ENCODE measurements at regions of chr7 and their contacts with region 1.

Region 1: GRCh38 chr7:95396136-95397032 is at the start of gene PON3:
- DNase-seq: peak in 1 of 2 experiments; percentile 56
- H3K4me3 ChIP-seq: peak within 1 kb of the TSS in 1 of 4 experiments; percentile 22; a peak in 1 of 8 replicates
- H3K27ac ChIP-seq: no peak within 1 kb of the TSS
- H3K4me1 ChIP-seq: no peaks in the 10 kb centered on the region; a peak in 1 of 7 replicates
- H3K27me3 ChIP-seq: no peaks in the 10 kb centered on the region
- CTCF ChIP-seq: peak; percentile 35 to 58 (median 55)
- EP300 ChIP-seq: no peak
- POLR2A ChIP-seq: no peak
- RAD21 ChIP-seq: peak; percentile 19 to 41; a peak in 3 of 4 replicates
- total RNA-seq, gene PON3: not detected in 2 replicates

Region 2: GRCh38 chr7:95367644-95368043 is 28.7 kb before region 1 on chr7:
- CTCF ChIA-PET with region 1: no interaction called
- POLR2A ChIA-PET with region 1: no interaction called
- DNase-seq: no peak
- H3K4me3 ChIP-seq: no peak overlapping the region
- H3K27ac ChIP-seq: no peak overlapping the region
- H3K4me1 ChIP-seq: no peaks in the 10 kb centered on the region
- H3K27me3 ChIP-seq: no peaks in the 10 kb centered on the region
- CTCF ChIP-seq: no peak
- EP300 ChIP-seq: no peak
- POLR2A ChIP-seq: no peak
- RAD21 ChIP-seq: no peak

Region 3: GRCh38 chr7:95411036-95411435 is 14.7 kb after region 1 on chr7:
- CTCF ChIA-PET with region 1: interaction called, 16 read pairs
- POLR2A ChIA-PET with region 1: no interaction called
- DNase-seq: no peak
- H3K4me3 ChIP-seq: no peak overlapping the region
- H3K27ac ChIP-seq: no peak overlapping the region
- H3K4me1 ChIP-seq: no peaks in the 10 kb centered on the region
- H3K27me3 ChIP-seq: no peaks in the 10 kb centered on the region
- CTCF ChIP-seq: no peak
- EP300 ChIP-seq: no peak
- POLR2A ChIP-seq: no peak
- RAD21 ChIP-seq: no peak

Region 4: DNA sequence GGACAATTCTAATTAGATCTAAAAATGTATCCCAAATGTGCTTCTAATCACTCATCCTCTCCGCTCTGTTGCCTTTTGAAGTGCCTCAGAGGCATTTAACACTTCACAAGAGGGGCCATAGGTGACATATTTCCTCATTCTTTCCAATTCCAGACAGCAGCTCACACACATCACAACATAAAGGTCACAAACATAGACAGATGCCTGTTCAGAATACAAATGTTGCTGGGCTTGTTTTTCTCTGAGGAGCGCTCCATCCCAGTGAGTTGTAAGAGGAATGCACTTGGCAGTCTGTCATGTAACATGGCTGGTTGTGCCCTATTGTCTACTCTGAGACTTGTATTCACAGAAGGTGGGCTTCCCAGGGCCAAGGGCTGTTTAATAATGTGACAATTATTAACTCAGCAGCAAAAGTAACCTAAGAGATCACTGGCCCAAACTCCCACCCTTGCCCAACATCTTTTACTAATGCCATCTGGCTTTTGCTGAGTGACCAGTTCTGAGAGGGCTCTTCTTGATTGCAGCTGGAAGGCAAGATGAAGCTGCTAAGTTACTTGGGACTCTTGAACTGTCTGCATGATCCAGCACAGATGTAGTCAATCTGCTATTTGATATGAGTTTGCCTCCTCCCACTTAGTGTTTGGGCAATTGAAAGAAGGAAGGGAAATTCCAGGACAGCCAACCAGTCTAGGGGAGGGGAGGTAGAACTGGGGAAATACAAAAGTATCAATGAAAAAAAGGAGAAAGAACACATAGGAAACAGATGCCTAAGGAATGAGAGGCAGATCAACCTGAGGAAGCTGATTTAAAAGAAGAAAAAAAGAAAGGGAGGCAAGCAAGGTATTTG is 24.8 kb after region 1 on chr7:
- CTCF ChIA-PET with region 1: interaction called, 11 read pairs
- POLR2A ChIA-PET with region 1: no interaction called
- DNase-seq: no peak
- H3K4me3 ChIP-seq: no peak overlapping the region
- H3K27ac ChIP-seq: no peak overlapping the region
- H3K4me1 ChIP-seq: peaks cover 0 to 3% (median 0%) of the 10 kb centered on the region in 4 experiments; a peak in 2 of 7 replicates
- H3K27me3 ChIP-seq: no peaks in the 10 kb centered on the region
- CTCF ChIP-seq: no peak
- EP300 ChIP-seq: no peak
- POLR2A ChIP-seq: no peak
- RAD21 ChIP-seq: no peak